ENCODE measurements at regions of chr9 and their contacts with region 1.

Region 1: DNA sequence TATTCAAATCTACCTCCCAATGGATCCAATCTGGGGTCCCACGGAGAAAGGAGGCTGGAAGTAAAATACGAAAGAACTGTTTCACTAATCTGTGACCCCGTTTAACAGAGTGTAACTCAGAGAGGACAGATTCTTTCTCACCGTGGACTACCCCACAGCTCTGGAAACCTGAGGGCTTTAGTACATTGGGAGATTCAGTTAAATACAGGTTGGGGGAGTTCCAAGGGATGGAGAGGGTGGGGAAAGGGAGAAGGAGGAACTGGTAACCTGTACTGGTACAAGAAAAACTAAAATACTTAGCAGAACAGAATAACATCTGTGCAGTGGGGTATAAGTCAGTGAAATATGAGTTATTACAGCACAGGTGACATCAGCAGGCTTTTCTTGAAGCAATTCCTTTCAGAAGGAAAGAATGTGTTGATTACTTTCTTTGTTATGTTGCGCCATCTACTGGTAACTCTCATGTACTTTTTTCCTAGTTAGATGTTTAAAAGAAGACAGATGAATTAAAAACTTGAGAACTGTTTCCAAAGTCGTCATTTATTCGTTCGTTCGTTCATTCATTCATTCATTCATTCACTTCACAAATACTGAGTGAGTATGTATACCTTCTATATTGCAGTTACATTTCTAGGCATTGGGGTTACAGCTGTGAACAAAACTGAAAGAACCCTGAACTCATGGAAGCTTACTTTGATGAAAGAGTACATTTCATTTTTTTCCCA is 30.0 kb upstream of the STOM start:
- H3K4me3 Mint-ChIP-seq: no peak overlapping the region
- H3K27ac Mint-ChIP-seq: no peak overlapping the region
- H3K4me1 Mint-ChIP-seq: peaks cover 6% of the 10 kb centered on the region
- H3K27me3 Mint-ChIP-seq: no peaks in the 10 kb centered on the region

Region 2: GRCh38 chr9:120974921-120975320 is 425.1 kb before region 1 on chr9:
- intact Hi-C with region 1: loop called (anchors 10 kb)
- H3K4me3 Mint-ChIP-seq: no peak overlapping the region
- H3K27ac Mint-ChIP-seq: no peak overlapping the region
- H3K4me1 Mint-ChIP-seq: no peaks in the 10 kb centered on the region
- H3K27me3 Mint-ChIP-seq: no peaks in the 10 kb centered on the region

Region 3: DNA sequence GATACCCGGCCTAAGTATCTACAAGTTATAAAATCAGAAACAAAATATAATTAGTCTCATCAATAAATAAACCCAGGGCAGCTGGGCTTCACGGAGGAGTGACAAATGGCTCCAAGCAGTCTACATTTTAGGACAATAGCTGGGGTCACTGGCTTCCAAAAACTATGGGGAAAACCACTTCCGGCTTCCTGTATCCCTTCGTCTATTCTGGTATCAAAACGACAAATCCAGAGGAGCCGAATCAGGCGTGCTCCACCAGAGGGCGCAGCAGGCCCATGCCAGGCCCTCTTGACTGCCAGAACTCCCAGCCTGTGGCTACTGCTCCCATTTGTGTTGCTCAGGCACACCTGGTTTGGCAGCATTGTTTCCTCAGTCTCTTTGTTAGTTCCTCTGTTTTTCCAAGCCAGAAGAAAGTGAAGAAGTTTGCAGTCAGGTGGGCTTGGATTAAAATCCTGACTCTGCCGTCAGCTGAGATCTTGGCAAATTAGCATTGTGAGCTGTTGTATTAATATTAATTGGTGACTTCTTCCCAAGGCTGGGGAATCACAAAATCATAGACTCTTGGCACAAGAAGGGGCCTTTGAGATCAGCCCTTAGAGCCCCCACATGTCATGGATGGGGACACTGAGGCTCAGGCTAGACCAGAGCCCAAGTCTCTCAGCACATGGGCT is 186.8 kb before region 1 on chr9:
- intact Hi-C with region 1: loop called (anchors 5 kb)
- H3K4me3 Mint-ChIP-seq: no peak overlapping the region
- H3K27ac Mint-ChIP-seq: no peak overlapping the region
- H3K4me1 Mint-ChIP-seq: peaks cover 50% of the 10 kb centered on the region
- H3K27me3 Mint-ChIP-seq: no peaks in the 10 kb centered on the region

Region 4: GRCh38 chr9:121322037-121322775 is 77.8 kb before region 1 on chr9:
- intact Hi-C with region 1: loop called (anchors 1 kb)
- H3K4me3 Mint-ChIP-seq: no peak overlapping the region
- H3K27ac Mint-ChIP-seq: no peak overlapping the region
- H3K4me1 Mint-ChIP-seq: peaks cover 35% of the 10 kb centered on the region
- H3K27me3 Mint-ChIP-seq: no peaks in the 10 kb centered on the region

Region 5: GRCh38 chr9:122498883-122499288 is 1098.8 kb after region 1 on chr9:
- intact Hi-C with region 1: no loop called
- H3K4me3 Mint-ChIP-seq: no peak overlapping the region
- H3K27ac Mint-ChIP-seq: no peak overlapping the region
- H3K4me1 Mint-ChIP-seq: no peaks in the 10 kb centered on the region
- H3K27me3 Mint-ChIP-seq: peaks cover 2% of the 10 kb centered on the region